ENCODE measurements at regions of chr6 and their contacts with region 1.

Region 1: DNA sequence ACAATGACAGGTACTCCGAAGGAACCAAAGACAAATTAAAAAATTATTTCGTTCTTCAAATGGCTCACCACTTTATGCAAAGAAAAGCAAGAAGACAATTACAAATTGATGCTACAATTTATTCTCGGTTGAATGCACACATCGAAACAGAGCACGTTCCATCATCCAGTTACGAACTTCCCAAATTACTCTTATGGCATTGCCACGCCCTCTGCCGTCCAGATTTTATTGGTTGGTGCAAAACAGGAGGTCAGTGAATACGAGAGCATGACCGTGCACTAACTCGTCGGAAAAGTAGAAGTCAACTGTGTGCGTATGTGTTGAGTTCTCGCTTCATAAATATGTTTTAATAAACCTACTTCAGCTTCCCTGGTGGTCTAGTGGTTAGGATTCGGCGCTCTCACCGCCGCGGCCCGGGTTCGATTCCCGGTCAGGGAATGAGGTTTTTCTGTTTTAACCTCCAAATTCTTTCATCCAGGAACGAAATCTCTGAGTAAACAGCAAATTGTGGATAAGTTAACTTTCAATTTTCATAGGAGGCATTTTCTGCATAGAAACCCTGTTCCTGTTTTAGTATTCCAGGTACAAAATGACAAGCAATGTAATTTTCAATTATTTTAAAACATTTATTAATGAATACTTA is 23.2 kb downstream of the ZNF311 start:
- DNase-seq: peak; percentile 48 to 89 (median 86)
- ATAC-seq: peak; percentile 81
- H3K4me3 ChIP-seq: peak overlapping the region; percentile 99
- H3K4me3 Mint-ChIP-seq: peak overlapping the region; percentile 85 to 100 (median 92)
- H3K27ac ChIP-seq: peak overlapping the region; percentile 47
- H3K27ac Mint-ChIP-seq: peak overlapping the region; percentile 87 to 100 (median 99)
- H3K4me1 ChIP-seq: peaks cover 7 to 18% of the 10 kb centered on the region in 2 donors
- H3K4me1 Mint-ChIP-seq: peaks cover 30 to 80% (median 66%) of the 10 kb centered on the region in 7 donors
- H3K27me3 ChIP-seq: no peaks in the 10 kb centered on the region
- H3K27me3 Mint-ChIP-seq: peaks cover 14 to 61% (median 36%) of the 10 kb centered on the region in 5 donors

Region 2: GRCh38 chr6:27359231-27359630 is 1622.7 kb before region 1 on chr6:
- CTCF ChIA-PET with region 1: no interaction called
- POLR2A ChIA-PET with region 1: no interaction called
- intact Hi-C with region 1: no loop called
- DNase-seq: no peak
- ATAC-seq: no peak
- H3K4me3 ChIP-seq: no peak overlapping the region
- H3K4me3 Mint-ChIP-seq: no peak overlapping the region
- H3K27ac ChIP-seq: no peak overlapping the region
- H3K27ac Mint-ChIP-seq: no peak overlapping the region
- H3K4me1 ChIP-seq: no peaks in the 10 kb centered on the region
- H3K4me1 Mint-ChIP-seq: no peaks in the 10 kb centered on the region
- H3K27me3 ChIP-seq: no peaks in the 10 kb centered on the region
- H3K27me3 Mint-ChIP-seq: peaks cover 0 to 4% (median 0%) of the 10 kb centered on the region in 5 donors

Region 3: GRCh38 chr6:27503436-27504030 is 1478.4 kb before region 1 on chr6:
- CTCF ChIA-PET with region 1: no interaction called
- POLR2A ChIA-PET with region 1: no interaction called
- intact Hi-C with region 1: loop called in 1 of 2 experiments (anchors 1 kb)
- DNase-seq: peak; percentile 73 to 86 (median 80)
- ATAC-seq: peak; percentile 75
- H3K4me3 ChIP-seq: peak overlapping the region; percentile 61
- H3K4me3 Mint-ChIP-seq: peak overlapping the region; percentile 85 to 99 (median 91)
- H3K27ac ChIP-seq: peak overlapping the region; percentile 57
- H3K27ac Mint-ChIP-seq: peak overlapping the region; percentile 82 to 97 (median 91)
- H3K4me1 ChIP-seq: peaks cover 6% of the 10 kb centered on the region in 2 donors
- H3K4me1 Mint-ChIP-seq: peaks cover 15 to 41% (median 36%) of the 10 kb centered on the region in 7 donors
- H3K27me3 ChIP-seq: no peaks in the 10 kb centered on the region
- H3K27me3 Mint-ChIP-seq: peaks cover 5 to 62% (median 11%) of the 10 kb centered on the region in 5 donors

Region 4: DNA sequence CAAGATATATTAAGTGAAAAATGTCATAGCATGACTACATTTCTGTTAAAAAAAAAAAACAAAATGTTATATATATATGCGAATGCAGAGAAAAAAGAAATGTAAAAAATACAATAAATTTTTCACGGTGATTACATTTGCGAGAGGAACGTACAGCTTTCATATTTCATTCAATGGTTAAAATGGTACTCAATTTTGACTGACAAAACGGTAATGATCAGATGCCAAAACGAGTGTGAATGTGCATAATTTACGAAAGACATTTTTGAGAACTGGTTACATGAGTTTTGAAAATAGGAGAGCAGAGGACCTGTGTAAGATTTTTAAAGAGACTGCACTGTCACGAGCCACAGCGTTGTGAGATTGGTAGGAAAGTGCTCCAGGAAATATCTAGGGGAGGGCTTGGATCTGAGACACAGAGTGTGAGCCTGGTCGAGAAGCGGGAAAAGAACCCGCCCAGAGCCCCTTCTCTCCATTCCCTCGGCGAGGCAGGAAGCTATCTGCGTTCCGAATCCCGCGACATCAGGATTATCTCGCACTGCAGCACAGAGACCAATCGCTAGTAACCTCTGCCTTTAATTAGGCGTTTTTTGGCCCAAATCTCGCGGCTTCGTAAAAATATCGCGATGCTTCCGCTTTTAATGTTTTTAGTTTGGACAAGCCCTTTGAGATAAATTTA is 86.7 kb before region 1 on chr6:
- CTCF ChIA-PET with region 1: interaction called, 7 read pairs
- POLR2A ChIA-PET with region 1: interaction called, 3 read pairs
- intact Hi-C with region 1: loop called (anchors 1 kb)
- DNase-seq: peak; percentile 72 to 95 (median 91)
- ATAC-seq: peak; percentile 83
- H3K4me3 ChIP-seq: peak overlapping the region; percentile 82
- H3K4me3 Mint-ChIP-seq: peak overlapping the region; percentile 92 to 100 (median 98)
- H3K27ac ChIP-seq: peak overlapping the region; percentile 99
- H3K27ac Mint-ChIP-seq: peak overlapping the region; percentile 98 to 100 (median 100)
- H3K4me1 ChIP-seq: peaks cover 5 to 6% of the 10 kb centered on the region in 2 donors
- H3K4me1 Mint-ChIP-seq: peaks cover 0 to 32% (median 14%) of the 10 kb centered on the region in 7 donors
- H3K27me3 ChIP-seq: no peaks in the 10 kb centered on the region
- H3K27me3 Mint-ChIP-seq: peaks cover 0 to 15% (median 0%) of the 10 kb centered on the region in 5 donors

Region 5: DNA sequence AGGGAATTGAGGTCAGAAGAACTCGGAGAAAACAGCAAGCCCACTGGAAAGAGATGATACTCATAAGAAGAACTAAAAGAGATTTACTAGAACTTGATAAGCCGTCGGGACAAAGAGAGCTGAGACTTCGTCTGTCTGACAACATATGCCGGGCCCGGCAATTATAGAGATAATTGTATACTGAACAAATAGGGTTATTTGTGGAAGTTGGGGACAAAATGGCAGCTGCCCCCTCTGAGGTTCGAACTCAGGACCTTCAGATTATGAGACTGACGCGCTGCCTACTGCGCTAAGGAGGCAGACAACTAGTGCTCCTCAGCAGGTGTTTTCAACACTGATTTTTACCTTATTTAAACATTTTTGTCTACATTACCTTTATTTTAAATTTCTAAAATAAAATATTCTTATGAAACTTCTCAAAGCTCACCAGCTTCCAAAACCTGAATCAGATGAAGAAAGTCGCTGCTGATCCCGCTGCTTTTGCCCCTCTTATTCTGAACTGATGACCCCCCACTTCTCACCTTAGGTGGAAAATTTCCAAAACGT is 28.8 kb before region 1 on chr6:
- CTCF ChIA-PET with region 1: no interaction called
- POLR2A ChIA-PET with region 1: interaction called, 3 read pairs
- intact Hi-C with region 1: loop called (anchors 1 to 2 kb)
- DNase-seq: peak; percentile 18 to 70 (median 62)
- ATAC-seq: peak; percentile 55
- H3K4me3 ChIP-seq: peak overlapping the region; percentile 58
- H3K4me3 Mint-ChIP-seq: peak overlapping the region; percentile 63 to 92 (median 86)
- H3K27ac ChIP-seq: no peak overlapping the region
- H3K27ac Mint-ChIP-seq: peak overlapping the region; percentile 6 to 88 (median 77)
- H3K4me1 ChIP-seq: peaks cover 3 to 7% of the 10 kb centered on the region in 2 donors
- H3K4me1 Mint-ChIP-seq: peaks cover 0 to 30% (median 19%) of the 10 kb centered on the region in 7 donors
- H3K27me3 ChIP-seq: no peaks in the 10 kb centered on the region
- H3K27me3 Mint-ChIP-seq: peaks cover 0 to 32% (median 6%) of the 10 kb centered on the region in 5 donors

Region 6: DNA sequence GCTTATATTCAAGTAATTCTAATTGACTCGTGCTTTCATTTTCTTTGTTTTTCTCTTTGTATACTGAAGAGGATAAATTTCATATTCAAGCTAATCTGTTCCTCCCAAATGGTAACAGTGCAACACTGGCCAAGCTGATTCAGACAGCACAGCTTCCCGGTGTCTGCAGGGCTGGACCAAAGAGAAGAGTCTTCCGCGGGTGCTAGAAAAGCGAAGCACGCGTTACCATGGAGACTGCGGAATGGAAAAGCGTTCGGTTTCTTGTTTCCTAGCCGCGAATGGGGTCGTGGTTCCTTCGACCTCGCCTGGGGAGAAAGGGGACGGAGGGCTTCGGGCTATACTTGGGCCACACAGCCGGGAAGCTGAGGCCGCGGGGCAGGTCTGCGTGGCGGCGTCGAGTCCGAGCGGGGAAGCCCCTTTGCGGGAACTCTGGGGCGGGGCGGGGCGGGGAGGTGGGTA is 29.4 kb after region 1 on chr6:
- CTCF ChIA-PET with region 1: interaction called, 5 read pairs
- POLR2A ChIA-PET with region 1: interaction called, 6 read pairs
- intact Hi-C with region 1: loop called (anchors 1 kb)
- DNase-seq: peak in 8 of 9 donors; percentile 35 to 57 (median 50)
- ATAC-seq: peak; percentile 77
- H3K4me3 ChIP-seq: peak overlapping the region; percentile 33
- H3K4me3 Mint-ChIP-seq: peak overlapping the region; percentile 88 to 98 (median 92)
- H3K27ac ChIP-seq: peak overlapping the region; percentile 51
- H3K27ac Mint-ChIP-seq: peak overlapping the region in 8 of 9 donors; percentile 5 to 95 (median 88)
- H3K4me1 ChIP-seq: peaks cover 2 to 4% of the 10 kb centered on the region in 2 donors
- H3K4me1 Mint-ChIP-seq: peaks cover 12 to 25% (median 20%) of the 10 kb centered on the region in 7 donors
- H3K27me3 ChIP-seq: peaks cover 0 to under 1% of the 10 kb centered on the region in 2 donors
- H3K27me3 Mint-ChIP-seq: peaks cover 0 to 33% (median 18%) of the 10 kb centered on the region in 5 donors

Region 7: GRCh38 chr6:29025927-29026585 is 44.1 kb after region 1 on chr6:
- CTCF ChIA-PET with region 1: no interaction called
- POLR2A ChIA-PET with region 1: no interaction called
- intact Hi-C with region 1: no loop called
- DNase-seq: no peak
- ATAC-seq: no peak
- H3K4me3 ChIP-seq: no peak overlapping the region
- H3K4me3 Mint-ChIP-seq: no peak overlapping the region
- H3K27ac ChIP-seq: no peak overlapping the region
- H3K27ac Mint-ChIP-seq: no peak overlapping the region
- H3K4me1 ChIP-seq: no peaks in the 10 kb centered on the region
- H3K4me1 Mint-ChIP-seq: no peaks in the 10 kb centered on the region
- H3K27me3 ChIP-seq: peaks cover 0 to 9% of the 10 kb centered on the region in 2 donors
- H3K27me3 Mint-ChIP-seq: peaks cover 52 to 70% (median 57%) of the 10 kb centered on the region in 5 donors

Region 8: GRCh38 chr6:30583921-30584320 is 1602.0 kb after region 1 on chr6:
- CTCF ChIA-PET with region 1: no interaction called
- POLR2A ChIA-PET with region 1: no interaction called
- intact Hi-C with region 1: no loop called
- DNase-seq: no peak
- ATAC-seq: no peak
- H3K4me3 ChIP-seq: no peak overlapping the region
- H3K4me3 Mint-ChIP-seq: no peak overlapping the region
- H3K27ac ChIP-seq: no peak overlapping the region
- H3K27ac Mint-ChIP-seq: peak overlapping the region in 6 of 9 donors; percentile 28 to 85 (median 45)
- H3K4me1 ChIP-seq: no peaks in the 10 kb centered on the region
- H3K4me1 Mint-ChIP-seq: peaks cover 0 to 8% (median 0%) of the 10 kb centered on the region in 7 donors
- H3K27me3 ChIP-seq: no peaks in the 10 kb centered on the region
- H3K27me3 Mint-ChIP-seq: no peaks in the 10 kb centered on the region